Motor neuron (in vitro differentiated cells): ENCODE measurements at regions of chr7 and their contacts with region 1.

Region 1: DNA sequence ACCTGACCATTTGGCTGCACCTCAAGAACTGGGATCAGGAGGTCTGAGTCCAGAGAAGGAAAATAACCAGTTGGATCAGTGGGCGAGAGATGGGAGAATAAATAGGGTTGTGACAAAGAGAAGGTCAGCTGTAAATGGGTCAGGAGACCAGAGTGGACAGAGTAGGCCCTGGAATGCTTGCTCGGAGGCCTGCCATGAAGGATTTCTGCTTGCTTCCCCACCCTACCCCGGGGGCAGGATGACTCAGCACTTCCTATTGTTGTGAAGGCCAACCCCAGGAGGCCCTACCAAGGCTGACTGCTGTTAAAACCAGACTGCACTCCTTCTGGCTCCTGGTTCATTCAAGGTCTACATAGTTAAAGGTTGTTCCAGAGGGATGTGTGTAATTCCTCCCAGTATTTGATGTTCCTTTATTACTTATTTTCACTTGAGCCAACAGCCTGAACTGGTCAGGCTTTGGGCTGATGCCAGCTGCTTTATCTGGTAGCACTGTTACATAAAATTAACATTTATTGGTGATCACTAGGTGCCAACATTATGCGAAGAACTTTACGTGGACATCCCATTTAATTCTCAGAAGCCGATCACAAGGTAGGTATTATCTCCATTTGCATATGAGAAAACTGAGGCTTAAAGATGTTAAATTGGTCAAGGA is 27.3 kb upstream of the IFRD1 start:
- ATAC-seq: peak; percentile 56 to 95 (median 86)
- H3K4me3 ChIP-seq: no peak overlapping the region
- H3K27ac ChIP-seq: peak overlapping the region in 1 of 2 donors; percentile 30
- H3K4me1 ChIP-seq: peaks cover 17 to 23% of the 10 kb centered on the region in 2 donors

Region 2: DNA sequence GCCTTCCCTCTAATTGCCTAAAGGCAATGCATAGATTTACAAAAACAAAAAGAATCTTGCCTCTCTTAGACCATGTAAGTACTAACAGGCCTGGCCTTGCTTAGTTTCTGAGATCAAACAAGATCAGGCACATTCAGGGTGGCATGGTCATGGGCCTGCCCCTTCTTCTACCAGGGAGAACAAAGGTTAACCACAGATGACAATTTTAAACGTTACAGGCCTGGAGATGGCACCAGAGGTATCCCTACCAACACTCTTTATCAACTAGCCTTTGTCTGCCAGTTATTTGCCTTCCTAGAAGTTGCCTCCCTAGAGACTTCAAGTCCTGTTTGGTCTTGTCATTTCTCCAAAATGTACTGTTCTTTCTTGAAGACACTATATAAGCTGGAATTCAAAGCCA is 469.4 kb before region 1 on chr7:
- in situ Hi-C with region 1: loop called in 1 of 9 experiments (anchors 25 kb)
- ATAC-seq: peak in 6 of 8 experiments; percentile 32 to 91 (median 64)
- H3K4me3 ChIP-seq: no peak overlapping the region
- H3K27ac ChIP-seq: no peak overlapping the region
- H3K4me1 ChIP-seq: peaks cover 8 to 10% of the 10 kb centered on the region in 2 donors

Region 3: GRCh38 chr7:112206238-112207044 is 216.5 kb before region 1 on chr7 and contains the starts of genes DOCK4 and ZNF277:
- in situ Hi-C with region 1: loop called in 2 of 9 experiments (anchors 25 kb)
- ATAC-seq: peak; percentile 81 to 91 (median 88)
- H3K4me3 ChIP-seq: peak within 1 kb of the TSS; percentile 64 to 98 (median 82)
- H3K27ac ChIP-seq: peak within 1 kb of the TSS; percentile 50 to 70
- H3K4me1 ChIP-seq: peaks cover 0 to 5% of the 10 kb centered on the region in 2 donors
- total RNA-seq, gene DOCK4: 8.1 to 27.3 (median 20.6) TPM
- total RNA-seq, gene ZNF277: 20.7 to 29.9 (median 28.0) TPM

Region 4: DNA sequence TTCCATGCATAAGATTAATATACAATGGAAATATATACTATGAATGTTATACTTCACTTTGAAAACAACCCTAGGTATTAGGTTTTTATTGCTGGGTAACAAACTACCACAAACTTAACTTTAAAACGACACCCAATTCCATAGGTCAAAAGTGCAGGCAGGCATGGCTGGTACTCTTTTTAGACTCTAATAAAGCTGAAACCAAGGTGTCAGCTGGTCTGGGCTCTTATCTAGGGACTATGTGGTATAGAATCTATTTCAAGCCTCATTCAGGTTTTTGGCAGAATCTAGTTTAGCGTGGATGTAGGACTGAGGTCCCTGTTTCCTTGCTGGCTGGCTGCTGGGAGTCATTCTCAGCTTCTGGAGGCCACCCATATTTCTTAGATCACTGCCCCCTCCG is 432.3 kb after region 1 on chr7:
- in situ Hi-C with region 1: no loop called
- ATAC-seq: no peak
- H3K4me3 ChIP-seq: no peak overlapping the region
- H3K27ac ChIP-seq: no peak overlapping the region
- H3K4me1 ChIP-seq: peaks cover 0 to 5% of the 10 kb centered on the region in 2 donors

Region 5: DNA sequence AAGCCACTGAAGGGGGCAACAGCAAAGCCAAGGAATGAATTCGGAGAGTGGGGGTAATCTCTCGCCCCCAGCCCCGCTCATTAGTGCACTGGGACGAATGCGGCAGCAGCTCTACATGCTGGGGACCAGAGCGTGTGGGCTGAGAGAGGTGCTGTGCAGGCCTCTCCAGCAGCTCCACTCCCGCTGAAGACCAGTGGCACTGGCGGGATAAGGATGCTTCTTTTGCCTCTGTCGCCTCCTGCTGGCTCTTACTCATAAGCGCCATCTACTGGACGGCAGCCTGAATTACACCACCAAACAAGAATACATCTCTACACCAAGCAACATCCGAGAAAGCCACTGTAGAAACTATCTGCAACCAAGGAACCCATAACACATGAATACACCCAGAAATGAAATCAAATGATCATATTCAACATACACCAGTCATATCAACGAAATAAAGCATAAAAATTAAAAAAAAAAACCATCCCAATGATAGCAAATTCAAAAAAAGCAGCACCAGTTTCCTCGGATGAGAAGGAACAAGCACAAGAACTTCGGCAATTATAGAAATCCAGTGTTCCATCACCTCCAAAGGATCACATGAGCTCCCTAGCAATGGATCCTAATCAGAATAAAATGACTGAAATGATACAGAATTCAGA is 446.3 kb after region 1 on chr7:
- in situ Hi-C with region 1: no loop called
- ATAC-seq: peak in 3 of 8 experiments; percentile 42 to 79 (median 45)
- H3K4me3 ChIP-seq: no peak overlapping the region
- H3K27ac ChIP-seq: no peak overlapping the region
- H3K4me1 ChIP-seq: no peaks in the 10 kb centered on the region